ENCODE measurements at regions of chr3 and their contacts with region 1.

Region 1: GRCh38 chr3:182683453-182683852 is 109.9 kb upstream of the ATP11B start:
- DNase-seq: peak; percentile 38
- H3K4me3 Mint-ChIP-seq: peak overlapping the region; percentile 71
- H3K27ac Mint-ChIP-seq: no peak overlapping the region
- H3K4me1 Mint-ChIP-seq: peaks cover 11% of the 10 kb centered on the region
- H3K27me3 Mint-ChIP-seq: peaks cover 41% of the 10 kb centered on the region

Region 2: GRCh38 chr3:181103605-181104004 is 1579.8 kb before region 1 on chr3:
- intact Hi-C with region 1: loop called (anchors 2 kb)
- DNase-seq: no peak
- H3K4me3 Mint-ChIP-seq: no peak overlapping the region
- H3K27ac Mint-ChIP-seq: no peak overlapping the region
- H3K4me1 Mint-ChIP-seq: no peaks in the 10 kb centered on the region
- H3K27me3 Mint-ChIP-seq: no peaks in the 10 kb centered on the region

Region 3: DNA sequence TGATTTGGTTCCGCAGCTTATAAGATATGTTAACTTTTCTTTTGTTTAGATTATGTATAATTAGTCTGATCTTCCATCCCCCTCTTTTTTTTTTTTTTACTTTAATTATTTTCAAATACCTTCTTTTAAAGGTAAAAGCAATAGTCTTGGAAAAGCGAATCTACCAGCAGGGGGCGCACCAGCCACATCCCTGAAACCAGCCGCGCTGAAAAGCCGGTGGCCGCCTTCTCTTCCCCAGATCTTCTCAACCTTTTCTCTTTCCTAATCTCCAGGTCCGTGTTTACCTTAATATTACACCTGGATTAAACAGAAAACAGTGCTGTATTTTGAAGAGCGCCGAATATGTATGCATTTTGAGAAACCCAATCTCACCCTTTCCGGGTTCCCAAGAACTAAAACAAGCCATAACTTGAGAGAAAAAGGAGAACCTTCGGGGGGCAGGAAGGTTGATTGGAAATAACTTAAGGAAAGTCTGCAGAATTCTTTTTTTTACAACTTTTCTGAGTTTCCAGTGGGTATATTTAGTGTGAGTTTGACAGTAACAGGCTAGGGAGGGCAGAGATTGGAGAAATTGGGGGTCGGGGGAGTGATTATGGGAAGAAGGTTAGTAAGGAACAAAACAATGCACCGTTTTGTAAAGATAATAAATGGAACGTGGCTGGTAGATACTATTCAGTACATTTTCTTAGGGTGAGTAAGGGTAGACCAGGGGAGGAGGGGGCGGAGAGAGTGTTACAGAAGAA is 973.7 kb before region 1 on chr3:
- intact Hi-C with region 1: loop called (anchors 1 kb)
- DNase-seq: peak; percentile 43
- H3K4me3 Mint-ChIP-seq: peak overlapping the region; percentile 53
- H3K27ac Mint-ChIP-seq: peak overlapping the region; percentile 68
- H3K4me1 Mint-ChIP-seq: peaks cover 11% of the 10 kb centered on the region
- H3K27me3 Mint-ChIP-seq: peaks cover 56% of the 10 kb centered on the region

Region 4: GRCh38 chr3:182248351-182248880 is 435.0 kb before region 1 on chr3:
- intact Hi-C with region 1: loop called (anchors 2 kb)
- DNase-seq: no peak
- H3K4me3 Mint-ChIP-seq: no peak overlapping the region
- H3K27ac Mint-ChIP-seq: no peak overlapping the region
- H3K4me1 Mint-ChIP-seq: no peaks in the 10 kb centered on the region
- H3K27me3 Mint-ChIP-seq: peaks cover 1% of the 10 kb centered on the region

Region 5: DNA sequence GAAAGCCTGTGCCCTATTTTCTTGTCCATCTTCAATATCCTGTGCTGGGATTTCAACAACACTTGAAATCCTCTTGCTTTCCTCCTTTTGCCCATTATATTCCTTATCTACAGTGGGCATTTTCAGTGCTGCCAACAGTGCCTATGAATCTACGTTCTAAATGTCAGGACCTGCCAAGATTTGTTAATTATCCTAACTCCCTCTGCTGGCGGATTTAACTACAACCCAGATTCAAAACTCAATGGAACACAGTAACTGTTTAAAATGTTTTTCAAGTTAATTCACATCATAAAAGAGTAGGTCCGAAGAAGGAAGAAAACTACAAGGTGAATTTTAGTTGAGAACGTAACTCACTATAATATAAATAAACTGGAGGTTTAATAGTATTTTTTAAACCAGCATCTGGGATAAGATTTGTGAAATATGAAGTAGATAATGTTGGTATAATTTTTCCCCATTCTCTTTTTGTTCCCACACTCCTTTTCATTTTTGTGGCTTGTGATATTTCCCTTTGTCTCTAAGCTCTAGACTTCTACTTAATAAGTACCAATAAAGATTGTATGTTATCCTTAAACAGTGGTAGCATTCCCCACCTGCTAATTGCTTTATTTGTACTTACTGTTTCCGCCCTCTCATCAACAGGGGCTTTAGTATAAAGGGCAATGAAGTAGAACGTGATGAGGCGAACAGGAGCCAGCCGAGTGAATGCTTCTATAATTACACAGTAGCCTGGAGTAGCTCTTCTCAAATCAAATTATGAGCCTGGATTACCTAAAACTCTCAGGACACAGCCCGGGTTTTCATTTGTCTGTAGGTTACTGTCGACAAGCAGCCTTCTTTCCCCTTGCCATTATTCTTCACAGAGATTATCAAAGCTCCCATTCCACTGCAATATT is 192.6 kb before region 1 on chr3:
- intact Hi-C with region 1: loop called (anchors 5 kb)
- DNase-seq: no peak
- H3K4me3 Mint-ChIP-seq: no peak overlapping the region
- H3K27ac Mint-ChIP-seq: no peak overlapping the region
- H3K4me1 Mint-ChIP-seq: no peaks in the 10 kb centered on the region
- H3K27me3 Mint-ChIP-seq: no peaks in the 10 kb centered on the region

Measured in activated T-helper 1 cell treated with anti-CD3 and anti-CD28 coated beads, Interleukin-12 subunit alpha, Interleukin-12 subunit beta, Interleukin-2, Interleukin-4 antibody, amounts not matched to agents 30 ng/mL and 10 ng/mL and 1 ng/mL, durations not matched to agents 14 hours and 24 hours and 36 hours (primary cell).